Activated B cell treated with CpG ODN at 0.5 μM for 24 hours (primary cell): ENCODE measurements at regions of chr11 and their contacts with region 1.

Region 1: GRCh38 chr11:73982969-73983740 is 512 bp upstream of the UCP2 start:
- DNase-seq: peak; percentile 86
- ATAC-seq: peak; percentile 68
- H3K4me3 Mint-ChIP-seq: peak overlapping the region; percentile 99
- H3K27ac Mint-ChIP-seq: peak overlapping the region; percentile 100
- H3K4me1 Mint-ChIP-seq: peaks cover 65% of the 10 kb centered on the region
- H3K27me3 Mint-ChIP-seq: no peaks in the 10 kb centered on the region
- CTCF ChIP-seq: no peak

Region 2: GRCh38 chr11:72585762-72586311 is 1397.3 kb before region 1 on chr11:
- CTCF ChIA-PET with region 1: no interaction called
- POLR2A ChIA-PET with region 1: no interaction called
- intact Hi-C with region 1: no loop called
- DNase-seq: peak; percentile 49
- ATAC-seq: peak; percentile 81
- H3K4me3 Mint-ChIP-seq: peak overlapping the region; percentile 87
- H3K27ac Mint-ChIP-seq: no peak overlapping the region
- H3K4me1 Mint-ChIP-seq: peaks cover 31% of the 10 kb centered on the region
- H3K27me3 Mint-ChIP-seq: peaks cover 21% of the 10 kb centered on the region
- CTCF ChIP-seq: peak; percentile 54

Region 3: GRCh38 chr11:73157053-73158010 is 825.8 kb before region 1 on chr11:
- CTCF ChIA-PET with region 1: no interaction called
- POLR2A ChIA-PET with region 1: no interaction called
- intact Hi-C with region 1: loop called (anchors 5 kb)
- DNase-seq: peak; percentile 51
- ATAC-seq: peak; percentile 51
- H3K4me3 Mint-ChIP-seq: peak overlapping the region; percentile 78
- H3K27ac Mint-ChIP-seq: peak overlapping the region; percentile 97
- H3K4me1 Mint-ChIP-seq: peaks cover 95% of the 10 kb centered on the region
- H3K27me3 Mint-ChIP-seq: no peaks in the 10 kb centered on the region
- CTCF ChIP-seq: no peak

Region 4: DNA sequence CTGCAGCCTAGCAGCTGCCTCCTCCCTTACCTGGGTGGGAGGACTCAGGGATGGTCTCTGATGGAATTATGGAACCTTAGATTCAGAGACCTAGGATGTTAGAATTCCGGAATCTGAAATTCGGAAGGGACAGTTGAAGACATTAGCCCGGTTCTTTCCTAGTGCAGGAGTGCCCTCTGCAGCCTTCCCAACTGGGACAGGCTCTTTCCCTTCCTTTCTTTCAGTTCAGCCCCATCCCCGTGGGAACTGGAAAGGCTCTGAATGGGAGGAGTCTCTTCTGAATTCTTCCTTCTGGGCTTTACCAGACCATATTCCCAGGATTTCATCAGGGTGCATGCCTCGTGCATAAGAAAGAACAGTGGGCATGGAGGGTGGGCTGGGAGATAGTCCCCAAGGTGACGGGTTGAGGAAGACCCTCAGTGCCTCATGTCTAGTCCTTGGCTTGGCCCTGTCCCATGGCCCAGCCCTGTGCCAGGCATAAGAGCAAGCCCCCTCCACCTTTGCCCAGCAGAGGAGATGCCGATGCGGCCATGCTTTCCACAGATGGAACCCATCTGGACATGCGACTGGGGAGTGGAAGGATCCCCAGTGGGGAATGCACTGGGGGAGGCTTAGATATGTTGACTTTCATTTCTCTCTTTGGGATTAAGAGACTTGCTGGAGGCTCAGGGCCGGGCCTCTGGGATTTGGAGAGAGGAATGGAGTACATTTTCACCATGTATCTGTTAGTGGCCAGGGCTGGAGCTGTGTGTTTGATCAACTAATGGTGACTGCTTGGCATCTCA is 17.9 kb before region 1 on chr11:
- CTCF ChIA-PET with region 1: interaction called, 9 read pairs
- POLR2A ChIA-PET with region 1: interaction called, 425 read pairs
- intact Hi-C with region 1: loop called (anchors 1 kb)
- DNase-seq: no peak
- ATAC-seq: no peak
- H3K4me3 Mint-ChIP-seq: no peak overlapping the region
- H3K27ac Mint-ChIP-seq: no peak overlapping the region
- H3K4me1 Mint-ChIP-seq: peaks cover 38% of the 10 kb centered on the region
- H3K27me3 Mint-ChIP-seq: no peaks in the 10 kb centered on the region
- CTCF ChIP-seq: no peak

Region 5: DNA sequence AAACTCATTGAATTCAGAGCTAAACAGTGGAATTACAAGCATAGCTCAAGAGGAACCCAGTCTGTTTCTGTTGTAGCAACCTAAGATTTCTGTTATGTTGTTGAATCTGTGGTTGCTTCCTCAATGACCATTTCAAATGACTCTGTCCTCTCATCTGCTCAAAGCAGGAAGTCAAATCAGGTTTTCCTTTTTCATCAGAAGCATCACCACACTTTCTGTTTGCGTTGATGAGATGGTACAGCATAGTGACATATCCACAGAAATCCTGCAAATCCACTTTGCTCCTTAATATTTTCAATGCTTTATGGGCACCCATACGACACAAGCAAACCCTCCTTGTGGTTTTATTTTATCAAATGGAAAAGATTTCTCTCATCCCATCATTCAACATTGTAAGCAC is 12.1 kb after region 1 on chr11:
- CTCF ChIA-PET with region 1: interaction called, 11 read pairs
- POLR2A ChIA-PET with region 1: interaction called, 425 read pairs
- intact Hi-C with region 1: loop called (anchors 1 kb)
- DNase-seq: no peak
- ATAC-seq: peak; percentile 45
- H3K4me3 Mint-ChIP-seq: peak overlapping the region; percentile 36
- H3K27ac Mint-ChIP-seq: peak overlapping the region; percentile 92
- H3K4me1 Mint-ChIP-seq: peaks cover 96% of the 10 kb centered on the region
- H3K27me3 Mint-ChIP-seq: no peaks in the 10 kb centered on the region
- CTCF ChIP-seq: no peak

Region 6: DNA sequence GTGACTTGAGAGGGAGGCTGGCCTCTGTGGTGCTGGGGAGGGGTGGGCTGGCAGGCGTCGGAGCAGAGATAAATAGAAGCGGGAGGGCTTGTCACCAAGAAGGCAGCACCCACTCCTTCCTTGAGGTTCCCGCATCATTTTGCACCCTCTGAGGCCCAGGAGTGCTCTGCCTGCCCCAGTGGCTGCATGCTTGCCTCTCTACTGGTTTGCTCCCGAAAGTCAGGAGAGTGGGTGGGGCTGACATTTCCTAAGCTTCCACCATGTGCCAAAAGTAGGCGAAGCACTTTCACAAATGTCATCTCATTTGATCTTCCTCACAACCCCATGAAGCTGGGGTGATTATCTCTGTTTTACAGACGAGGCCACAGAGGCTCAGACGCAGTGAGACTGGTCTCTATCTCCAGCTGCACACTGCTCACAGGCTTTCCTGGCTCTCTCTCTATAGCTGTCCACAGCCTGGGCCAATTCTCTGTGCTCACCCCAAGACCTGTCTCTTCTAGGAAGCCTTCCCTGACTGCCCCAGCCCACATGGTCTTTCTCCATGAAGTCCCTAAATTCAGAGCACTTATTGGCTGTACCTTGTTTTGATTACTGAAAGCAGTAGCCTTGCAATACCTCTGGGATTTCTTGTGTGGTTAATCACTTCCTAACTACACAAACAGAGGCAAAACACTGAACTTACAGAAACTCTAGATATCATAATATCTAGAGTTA is 28.4 kb after region 1 on chr11:
- CTCF ChIA-PET with region 1: no interaction called
- POLR2A ChIA-PET with region 1: interaction called, 24 read pairs
- intact Hi-C with region 1: loop called (anchors 1 kb)
- DNase-seq: no peak
- ATAC-seq: peak; percentile 87
- H3K4me3 Mint-ChIP-seq: peak overlapping the region; percentile 70
- H3K27ac Mint-ChIP-seq: peak overlapping the region; percentile 92
- H3K4me1 Mint-ChIP-seq: peaks cover 74% of the 10 kb centered on the region
- H3K27me3 Mint-ChIP-seq: no peaks in the 10 kb centered on the region
- CTCF ChIP-seq: no peak

Region 7: DNA sequence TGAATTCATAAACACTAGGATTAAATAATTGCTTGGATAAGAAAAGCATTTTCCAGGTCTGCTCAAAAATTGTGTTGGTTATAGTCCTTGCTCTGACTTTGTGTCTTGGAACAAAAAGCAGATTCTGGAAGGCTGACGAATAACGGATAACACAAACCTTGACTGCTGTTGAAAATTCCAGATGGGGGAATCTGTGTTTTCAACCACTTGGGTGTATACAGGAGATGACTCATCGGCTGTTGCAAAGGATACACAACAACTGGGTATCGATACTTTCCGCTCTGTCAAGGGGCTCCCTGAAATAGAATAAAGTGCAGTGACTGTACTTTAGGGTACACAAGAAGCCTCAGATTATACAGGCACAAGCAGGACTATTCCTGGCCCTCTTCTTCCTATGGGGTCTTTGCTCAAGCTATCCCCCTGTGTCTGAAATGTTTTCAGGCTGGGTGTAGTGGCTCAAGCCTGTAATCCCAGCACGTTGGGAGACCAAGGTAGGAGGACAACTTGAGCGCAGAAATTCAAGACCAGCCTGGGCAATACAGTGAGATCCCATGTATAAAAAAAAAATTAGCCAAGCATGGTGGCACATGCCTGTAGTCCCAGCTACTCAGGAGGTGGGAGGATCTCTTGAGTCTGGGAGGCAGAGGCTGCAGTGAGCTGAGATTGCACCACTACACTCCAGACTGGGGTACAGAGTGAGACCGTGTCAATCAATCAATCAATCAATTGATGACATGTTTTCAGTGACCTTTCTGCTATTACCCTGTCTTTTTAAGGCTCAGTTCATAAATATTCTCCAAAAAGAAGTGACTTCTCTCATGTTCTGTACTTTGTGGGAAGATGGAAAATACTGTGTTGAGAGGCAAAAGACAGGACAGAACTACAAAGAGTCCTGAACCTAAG is 74.3 kb after region 1 on chr11:
- CTCF ChIA-PET with region 1: no interaction called
- POLR2A ChIA-PET with region 1: no interaction called
- intact Hi-C with region 1: no loop called
- DNase-seq: no peak
- ATAC-seq: no peak
- H3K4me3 Mint-ChIP-seq: no peak overlapping the region
- H3K27ac Mint-ChIP-seq: no peak overlapping the region
- H3K4me1 Mint-ChIP-seq: peaks cover under 1% of the 10 kb centered on the region
- H3K27me3 Mint-ChIP-seq: no peaks in the 10 kb centered on the region
- CTCF ChIP-seq: no peak

Region 8: DNA sequence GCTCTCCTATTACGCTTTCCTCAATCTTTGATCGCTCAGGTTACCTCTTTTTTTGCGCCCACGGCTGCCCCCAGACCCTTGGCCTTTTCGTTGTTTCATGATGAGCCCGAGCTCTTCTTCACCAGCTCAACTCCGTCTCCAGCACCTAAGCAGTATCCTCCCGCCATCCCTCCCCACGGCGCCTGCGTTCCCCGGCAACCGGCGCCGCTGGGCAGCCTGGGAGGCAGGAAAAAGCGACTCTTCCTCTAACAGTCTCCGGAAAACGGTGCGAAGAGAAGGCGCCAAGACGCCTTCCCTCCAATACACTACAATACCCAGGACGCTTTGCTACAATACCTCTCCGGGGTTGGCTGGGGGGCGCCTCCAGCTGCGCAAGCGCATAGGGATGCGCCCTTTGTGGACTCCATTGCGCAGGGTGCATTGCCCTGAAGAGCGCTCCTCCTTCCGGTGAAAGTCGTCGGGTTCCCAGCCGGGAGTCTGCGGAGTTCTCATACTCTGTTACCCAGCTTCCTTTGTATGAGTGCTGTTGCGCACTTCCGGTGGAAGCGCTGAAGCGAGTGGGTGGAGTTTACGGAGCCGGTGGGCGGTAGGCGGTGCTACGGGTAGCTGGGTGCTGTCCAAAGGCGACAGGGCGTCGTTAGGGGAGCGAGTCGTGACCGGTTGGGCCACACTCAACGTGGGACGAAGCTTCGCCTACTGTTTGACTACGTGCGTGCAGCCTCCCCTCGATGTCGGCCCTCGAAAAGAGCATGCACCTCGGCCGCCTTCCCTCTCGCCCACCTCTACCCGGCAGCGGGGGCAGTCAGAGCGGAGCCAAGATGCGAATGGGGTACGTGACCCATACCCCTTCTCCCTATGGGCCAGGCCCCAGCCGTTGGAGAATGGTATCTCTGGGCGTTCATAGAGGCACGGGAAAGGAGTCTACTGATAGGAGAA is 187.8 kb after region 1 on chr11 and contains the starts of genes C2CD3 and PPME1:
- CTCF ChIA-PET with region 1: no interaction called
- POLR2A ChIA-PET with region 1: interaction called, 35 read pairs
- intact Hi-C with region 1: loop called (anchors 1 kb)
- DNase-seq: peak; percentile 94
- ATAC-seq: peak; percentile 93
- H3K4me3 Mint-ChIP-seq: no peak within 1 kb of the TSS
- H3K27ac Mint-ChIP-seq: no peak within 1 kb of the TSS
- H3K4me1 Mint-ChIP-seq: peaks cover 12% of the 10 kb centered on the region
- H3K27me3 Mint-ChIP-seq: no peaks in the 10 kb centered on the region
- CTCF ChIP-seq: no peak
- total RNA-seq, gene C2CD3: 36.2 and 50.3 TPM in 2 replicates
- total RNA-seq, gene PPME1: 12.4 and 17.3 TPM in 2 replicates